Activated CD8-positive, alpha-beta T cell treated with anti-CD3 and anti-CD28 coated beads, Interleukin-2, amount 10 ng/mL, durations not matched to agents 7 days and 5 days (primary cell): ENCODE measurements at regions of chr2 and their contacts with region 1.

Region 1: DNA sequence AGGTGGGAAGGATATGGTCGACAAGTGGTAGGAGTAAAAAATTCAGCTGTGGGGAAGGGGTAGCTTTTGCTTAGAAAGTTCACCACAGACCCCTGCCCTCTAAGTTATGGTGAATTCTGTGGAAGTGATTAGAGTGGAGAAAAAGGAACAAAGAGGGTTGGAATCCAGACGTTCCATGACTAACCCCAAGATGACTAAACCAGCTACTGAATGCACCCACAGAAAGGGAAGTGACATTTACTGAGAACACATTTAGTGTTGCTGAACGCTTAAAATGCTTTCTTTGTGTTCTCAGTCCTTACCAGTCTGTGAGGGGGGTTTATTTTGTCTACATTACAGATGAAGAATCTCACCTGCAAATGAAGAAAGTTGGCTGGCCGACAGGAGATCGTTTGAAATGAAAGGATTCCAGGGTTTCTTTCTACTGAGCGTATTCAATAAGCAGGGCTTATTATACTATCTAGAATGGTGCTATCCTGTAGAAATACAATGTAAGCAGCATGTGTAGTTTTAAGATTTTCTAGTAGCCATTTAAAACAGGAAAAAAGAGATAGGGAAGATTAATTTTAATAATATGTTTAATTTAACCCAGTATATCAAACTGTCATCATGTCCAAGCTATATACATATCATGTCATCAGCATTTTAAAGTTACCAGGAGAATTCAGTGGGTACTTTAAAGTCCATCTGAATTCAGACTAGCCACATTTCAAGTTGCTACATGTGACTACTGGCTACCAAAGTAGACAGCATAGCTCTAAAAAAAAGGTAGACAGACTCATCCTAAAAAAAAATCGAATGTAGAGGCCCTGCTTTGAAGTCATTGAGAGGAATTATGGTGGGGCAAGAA is 60.1 kb downstream of the LIMS1 start:
- DNase-seq: no peak
- ATAC-seq: peak; percentile 52
- H3K4me3 Mint-ChIP-seq: peak overlapping the region; percentile 27
- H3K27ac Mint-ChIP-seq: peak overlapping the region; percentile 54
- H3K4me1 Mint-ChIP-seq: peaks cover 49% of the 10 kb centered on the region
- H3K27me3 Mint-ChIP-seq: no peaks in the 10 kb centered on the region

Region 2: GRCh38 chr2:108583903-108584520 is 10.3 kb before region 1 on chr2:
- CTCF ChIA-PET with region 1: interaction called, 16 read pairs
- POLR2A ChIA-PET with region 1: no interaction called
- DNase-seq: peak; percentile 74
- ATAC-seq: peak; percentile 93
- H3K4me3 Mint-ChIP-seq: no peak overlapping the region
- H3K27ac Mint-ChIP-seq: no peak overlapping the region
- H3K4me1 Mint-ChIP-seq: peaks cover 20% of the 10 kb centered on the region
- H3K27me3 Mint-ChIP-seq: no peaks in the 10 kb centered on the region

Region 3: GRCh38 chr2:108621087-108621559 is 26.8 kb after region 1 on chr2:
- CTCF ChIA-PET with region 1: interaction called, 13 read pairs
- POLR2A ChIA-PET with region 1: interaction called, 6 read pairs
- DNase-seq: peak; percentile 85
- ATAC-seq: peak; percentile 99
- H3K4me3 Mint-ChIP-seq: peak overlapping the region; percentile 73
- H3K27ac Mint-ChIP-seq: peak overlapping the region; percentile 91
- H3K4me1 Mint-ChIP-seq: peaks cover 66% of the 10 kb centered on the region
- H3K27me3 Mint-ChIP-seq: no peaks in the 10 kb centered on the region

Region 4: GRCh38 chr2:108637304-108637669 is 42.9 kb after region 1 on chr2:
- CTCF ChIA-PET with region 1: interaction called, 45 read pairs
- POLR2A ChIA-PET with region 1: no interaction called
- DNase-seq: no peak
- ATAC-seq: no peak
- H3K4me3 Mint-ChIP-seq: no peak overlapping the region
- H3K27ac Mint-ChIP-seq: no peak overlapping the region
- H3K4me1 Mint-ChIP-seq: peaks cover 23% of the 10 kb centered on the region
- H3K27me3 Mint-ChIP-seq: no peaks in the 10 kb centered on the region